Dendritic cell treated with granulocyte-macrophage colony-stimulating factor and Interleukin-4, amounts not matched to agents 40 ng/mL and 50 ng/mL, for 4 days (primary cell): ENCODE measurements at regions of chr3 and their contacts with region 1.

Region 1: DNA sequence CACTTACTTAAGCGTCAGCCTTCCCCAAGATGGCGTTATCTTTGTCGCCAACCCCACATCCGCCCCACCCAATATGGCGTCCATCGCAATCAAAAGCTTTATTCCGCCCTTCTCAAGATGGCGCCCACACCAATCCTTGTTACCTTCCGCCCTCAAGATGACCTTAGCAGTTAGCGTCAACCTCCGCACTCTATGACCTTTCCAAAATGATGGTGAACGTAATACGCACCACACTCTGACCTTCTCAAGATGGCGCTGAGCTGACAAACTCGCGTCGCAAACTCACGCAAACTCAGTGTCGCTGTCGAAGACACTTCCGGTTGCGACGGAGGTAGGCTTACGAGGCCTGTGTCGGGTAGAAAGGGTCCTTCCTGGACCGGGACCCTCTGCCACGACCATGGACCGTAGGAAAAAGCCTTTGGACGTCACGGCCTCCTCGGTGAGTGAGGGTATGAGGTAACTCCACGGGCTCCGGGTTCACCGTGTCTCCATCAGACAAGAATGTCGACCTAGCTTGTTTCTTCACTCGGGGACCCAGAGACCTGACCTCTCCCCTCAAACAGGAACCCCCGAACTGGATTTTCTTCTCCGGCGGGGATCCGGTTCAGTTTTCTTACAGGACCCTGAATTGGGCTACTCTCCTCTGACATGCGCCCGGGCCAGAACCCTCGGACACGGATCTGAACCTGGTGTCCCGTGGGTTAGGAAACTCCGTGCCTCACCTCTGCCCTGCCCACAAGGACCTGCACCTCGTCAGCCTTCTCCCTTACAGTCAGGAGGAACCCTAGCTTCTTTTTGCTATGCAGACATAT is at the start of gene CCDC174:
- H3K4me3 Mint-ChIP-seq: peak within 1 kb of the TSS; percentile 100
- H3K27ac Mint-ChIP-seq: peak within 1 kb of the TSS; percentile 96
- H3K4me1 Mint-ChIP-seq: peaks cover 41% of the 10 kb centered on the region
- H3K27me3 Mint-ChIP-seq: no peaks in the 10 kb centered on the region

Region 2: DNA sequence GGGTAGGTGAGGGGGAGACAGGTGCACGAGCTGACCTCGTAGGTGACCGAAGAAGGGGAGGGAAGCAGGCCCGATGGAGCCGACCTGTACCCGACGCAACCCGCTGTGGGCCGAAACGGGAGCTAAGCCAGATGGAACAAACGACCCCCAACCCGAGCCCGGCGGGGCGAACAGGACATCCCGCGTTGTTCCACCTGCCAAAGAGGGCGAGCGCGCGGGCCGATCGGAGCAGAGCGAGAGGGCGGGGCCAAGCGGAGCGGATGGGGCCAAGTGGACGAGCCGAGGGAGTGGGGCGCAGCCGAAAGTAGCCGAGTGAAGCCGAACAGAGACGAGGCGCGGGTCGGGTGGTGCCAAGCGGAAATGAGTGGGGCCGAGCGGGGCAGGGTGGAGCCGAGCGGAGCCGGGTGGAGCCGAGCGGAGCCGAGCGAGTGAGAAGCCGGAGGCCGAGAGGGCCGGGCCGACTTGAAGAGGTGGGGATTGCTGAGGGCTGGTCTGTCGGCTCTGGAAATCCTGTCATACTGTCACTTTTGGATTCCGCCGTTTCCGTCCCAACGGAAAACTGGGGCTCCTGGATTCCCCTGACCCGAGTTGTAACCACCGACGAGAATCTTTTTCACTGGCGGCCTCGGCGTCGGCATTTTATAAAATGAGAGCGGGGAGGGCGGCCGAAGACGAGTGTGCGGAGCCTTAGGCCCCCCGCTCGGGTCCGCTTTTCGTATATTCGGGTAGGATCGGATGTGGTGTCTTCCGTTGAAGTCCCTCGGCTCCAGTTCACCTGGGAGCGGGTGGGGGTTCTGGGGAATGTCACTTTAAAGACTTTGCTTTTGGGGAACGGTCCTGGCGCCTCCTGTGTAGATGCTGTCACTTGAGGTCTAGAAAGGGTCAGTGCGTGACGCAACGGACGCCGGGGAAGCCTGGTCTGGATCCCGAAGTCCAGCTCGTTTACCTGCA is 756.2 kb before region 1 on chr3:
- intact Hi-C with region 1: loop called (anchors 10 kb)
- H3K4me3 Mint-ChIP-seq: peak overlapping the region; percentile 83
- H3K27ac Mint-ChIP-seq: peak overlapping the region; percentile 80
- H3K4me1 Mint-ChIP-seq: peaks cover 21% of the 10 kb centered on the region
- H3K27me3 Mint-ChIP-seq: peaks cover 32% of the 10 kb centered on the region

Region 3: GRCh38 chr3:14178247-14179113 is 473.2 kb before region 1 on chr3 and contains the starts of genes LSM3 and XPC:
- intact Hi-C with region 1: loop called (anchors 5 kb)
- H3K4me3 Mint-ChIP-seq: peak within 1 kb of the TSS; percentile 91
- H3K27ac Mint-ChIP-seq: peak within 1 kb of the TSS; percentile 98
- H3K4me1 Mint-ChIP-seq: peaks cover 43% of the 10 kb centered on the region
- H3K27me3 Mint-ChIP-seq: no peaks in the 10 kb centered on the region

Region 4: DNA sequence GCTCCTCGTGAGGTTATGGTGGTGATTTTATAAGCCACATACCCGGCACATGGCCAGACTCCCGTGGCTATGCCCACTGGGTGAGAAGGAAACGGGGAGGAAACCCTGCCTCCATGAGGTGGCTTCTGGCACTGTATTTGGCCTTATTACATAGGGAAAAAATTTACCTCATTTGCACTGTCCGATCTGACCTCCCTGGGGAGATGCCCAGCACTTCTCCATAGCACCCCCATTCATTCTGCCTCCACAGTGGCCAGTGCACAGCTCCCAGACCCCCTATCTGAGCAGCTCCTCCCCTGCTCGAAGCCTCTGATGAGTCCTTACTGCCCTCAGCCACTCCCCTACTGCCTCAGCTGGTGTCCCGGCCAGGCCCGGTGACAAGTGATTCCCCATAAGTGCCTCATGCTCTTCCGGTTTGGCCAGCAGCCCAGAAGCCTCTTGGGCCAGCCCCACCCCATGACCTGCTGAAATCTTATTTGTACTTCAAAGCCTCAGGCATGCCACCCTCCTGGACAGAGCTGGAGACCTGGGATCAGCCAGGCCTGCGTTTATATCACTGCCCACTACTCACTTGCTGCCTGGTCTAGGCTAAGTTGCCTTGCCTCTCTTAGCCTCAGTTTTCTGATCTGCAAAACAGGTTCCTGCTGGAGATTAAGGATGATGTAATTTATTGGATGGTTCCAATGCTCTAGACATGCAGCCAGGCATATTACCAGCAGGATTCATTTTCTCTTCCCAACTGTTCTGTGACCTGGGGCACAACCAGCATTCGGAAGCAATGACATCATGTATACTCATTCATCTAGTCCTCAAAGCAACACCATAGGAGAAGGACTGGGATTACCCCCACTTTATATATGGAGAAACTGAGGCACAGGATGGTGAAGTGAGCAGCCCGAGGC is 279.8 kb before region 1 on chr3:
- intact Hi-C with region 1: no loop called
- H3K4me3 Mint-ChIP-seq: peak overlapping the region; percentile 18
- H3K27ac Mint-ChIP-seq: peak overlapping the region; percentile 83
- H3K4me1 Mint-ChIP-seq: peaks cover 76% of the 10 kb centered on the region
- H3K27me3 Mint-ChIP-seq: peaks cover 13% of the 10 kb centered on the region

Region 5: GRCh38 chr3:15064835-15065549 is 413.3 kb after region 1 on chr3 and contains the start of gene MRPS25:
- intact Hi-C with region 1: loop called (anchors 10 kb)
- H3K4me3 Mint-ChIP-seq: peak within 1 kb of the TSS; percentile 91
- H3K27ac Mint-ChIP-seq: peak within 1 kb of the TSS; percentile 97
- H3K4me1 Mint-ChIP-seq: peaks cover 16% of the 10 kb centered on the region
- H3K27me3 Mint-ChIP-seq: no peaks in the 10 kb centered on the region

Region 6: DNA sequence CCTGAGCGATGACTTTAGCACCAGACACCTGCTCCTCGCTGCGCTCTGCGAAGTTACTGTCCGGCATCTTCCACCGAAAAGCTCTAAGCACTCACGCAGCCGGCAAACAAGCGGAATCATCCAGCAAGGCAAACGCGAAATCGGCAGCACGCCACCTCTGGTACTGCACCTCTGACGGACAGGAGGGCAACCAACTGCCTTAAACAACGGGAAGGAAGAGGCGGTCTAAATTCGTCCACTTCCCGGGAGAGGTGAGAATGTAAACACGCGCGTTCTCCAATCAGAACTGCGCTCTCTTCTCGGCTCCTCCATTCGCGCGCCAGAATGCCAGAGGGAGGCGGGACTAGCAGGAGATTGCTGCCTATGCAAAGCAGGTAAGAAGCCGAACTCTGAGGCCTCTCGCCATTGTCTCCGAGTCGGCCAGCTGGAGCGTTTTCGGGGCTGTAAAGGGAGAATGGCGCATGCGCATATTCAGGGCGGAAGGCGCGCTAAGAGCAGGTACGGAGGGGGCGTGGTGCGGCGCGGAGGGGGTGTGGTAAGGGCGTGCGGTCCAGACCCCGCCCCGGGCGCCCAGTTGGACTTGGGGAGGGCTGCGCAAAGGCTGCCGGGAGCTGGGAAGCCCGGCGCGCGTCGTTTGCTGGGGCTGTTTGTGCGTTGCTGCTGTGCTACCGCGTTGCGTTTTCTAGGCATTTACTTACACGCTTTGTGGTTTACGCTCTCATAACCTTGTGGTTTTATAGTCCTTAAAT is 949.9 kb after region 1 on chr3 and contains the starts of genes BTD and HACL1:
- intact Hi-C with region 1: loop called (anchors 5 kb)
- H3K4me3 Mint-ChIP-seq: peak within 1 kb of the TSS; percentile 96
- H3K27ac Mint-ChIP-seq: peak within 1 kb of the TSS; percentile 94
- H3K4me1 Mint-ChIP-seq: peaks cover 40% of the 10 kb centered on the region
- H3K27me3 Mint-ChIP-seq: no peaks in the 10 kb centered on the region

Region 7: GRCh38 chr3:15682561-15683185 is 1031.0 kb after region 1 on chr3:
- intact Hi-C with region 1: no loop called
- H3K4me3 Mint-ChIP-seq: no peak overlapping the region
- H3K27ac Mint-ChIP-seq: no peak overlapping the region
- H3K4me1 Mint-ChIP-seq: peaks cover 11% of the 10 kb centered on the region
- H3K27me3 Mint-ChIP-seq: no peaks in the 10 kb centered on the region